ENCODE measurements at regions of chr14 and their contacts with region 1.

Region 1: DNA sequence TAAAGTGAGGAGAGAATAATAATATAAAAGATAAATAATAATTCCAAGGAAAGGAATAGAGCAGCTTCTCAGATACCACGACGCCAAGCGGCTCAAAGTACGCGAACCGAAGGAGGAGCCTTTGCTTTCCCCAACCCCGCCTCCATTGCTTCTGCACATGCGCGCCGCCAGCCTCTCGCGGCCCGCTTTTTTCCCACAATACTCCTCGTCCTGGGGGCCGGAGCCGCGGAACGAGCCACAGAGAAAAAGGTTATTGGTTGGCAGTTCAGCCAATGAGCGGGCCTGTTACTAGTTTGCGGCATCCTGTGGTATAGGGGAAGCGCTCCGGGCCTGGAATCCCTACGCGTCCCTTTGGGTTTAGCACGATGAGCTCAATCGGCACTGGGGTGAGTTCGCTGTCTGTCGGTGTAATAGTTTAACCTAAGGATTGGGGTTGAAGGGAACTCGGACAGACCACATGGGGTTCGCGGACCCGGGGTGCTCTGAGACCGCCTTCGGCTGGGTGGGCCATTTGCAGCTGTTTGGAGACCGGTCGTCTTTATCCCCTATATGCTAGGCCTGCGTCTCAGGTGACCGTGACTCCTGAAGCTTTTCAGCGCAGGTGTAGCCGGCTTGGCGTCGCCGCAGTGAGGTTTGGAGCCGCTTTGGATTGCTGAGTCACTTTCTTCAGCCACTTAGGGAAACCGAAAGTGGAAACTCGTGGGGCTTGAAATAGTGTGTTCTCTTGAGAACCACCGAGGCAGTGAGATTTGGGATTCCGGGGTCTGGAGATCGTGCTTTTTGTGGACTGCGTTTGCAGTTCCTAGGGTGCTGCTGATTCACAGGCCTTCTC is at the start of gene PSMA3:
- DNase-seq: peak; percentile 98 to 99 (median 98)
- ATAC-seq: peak; percentile 97 to 98
- H3K4me3 ChIP-seq: peak within 1 kb of the TSS; percentile 84
- H3K27ac ChIP-seq: peak within 1 kb of the TSS; percentile 94
- H3K4me1 ChIP-seq: no peaks in the 10 kb centered on the region
- H3K27me3 ChIP-seq: no peaks in the 10 kb centered on the region
- total RNA-seq, gene PSMA3: 112 to 147 (median 124) TPM

Region 2: DNA sequence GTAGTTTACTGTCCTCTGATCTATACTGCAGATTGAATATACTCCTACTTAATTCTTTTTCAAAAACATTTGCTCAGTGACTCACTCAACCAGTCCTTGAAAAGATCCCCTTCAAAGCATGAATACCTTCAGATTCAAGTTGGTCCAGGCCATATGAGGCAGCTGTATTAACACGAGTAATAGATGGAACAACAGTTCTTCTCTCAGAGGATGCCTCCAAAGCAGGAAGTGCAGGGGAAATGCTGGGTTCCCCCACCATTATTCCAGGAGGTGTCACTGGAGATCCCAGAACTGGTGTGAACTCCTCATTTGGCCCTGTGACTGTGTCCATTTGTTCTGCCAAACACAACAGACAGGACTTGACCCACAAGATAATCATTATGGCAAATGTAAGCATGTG is 113.4 kb before region 1 on chr14:
- intact Hi-C with region 1: no loop called
- DNase-seq: no peak
- ATAC-seq: peak; percentile 59 to 64
- H3K4me3 ChIP-seq: no peak overlapping the region
- H3K27ac ChIP-seq: no peak overlapping the region
- H3K4me1 ChIP-seq: no peaks in the 10 kb centered on the region
- H3K27me3 ChIP-seq: no peaks in the 10 kb centered on the region

Region 3: DNA sequence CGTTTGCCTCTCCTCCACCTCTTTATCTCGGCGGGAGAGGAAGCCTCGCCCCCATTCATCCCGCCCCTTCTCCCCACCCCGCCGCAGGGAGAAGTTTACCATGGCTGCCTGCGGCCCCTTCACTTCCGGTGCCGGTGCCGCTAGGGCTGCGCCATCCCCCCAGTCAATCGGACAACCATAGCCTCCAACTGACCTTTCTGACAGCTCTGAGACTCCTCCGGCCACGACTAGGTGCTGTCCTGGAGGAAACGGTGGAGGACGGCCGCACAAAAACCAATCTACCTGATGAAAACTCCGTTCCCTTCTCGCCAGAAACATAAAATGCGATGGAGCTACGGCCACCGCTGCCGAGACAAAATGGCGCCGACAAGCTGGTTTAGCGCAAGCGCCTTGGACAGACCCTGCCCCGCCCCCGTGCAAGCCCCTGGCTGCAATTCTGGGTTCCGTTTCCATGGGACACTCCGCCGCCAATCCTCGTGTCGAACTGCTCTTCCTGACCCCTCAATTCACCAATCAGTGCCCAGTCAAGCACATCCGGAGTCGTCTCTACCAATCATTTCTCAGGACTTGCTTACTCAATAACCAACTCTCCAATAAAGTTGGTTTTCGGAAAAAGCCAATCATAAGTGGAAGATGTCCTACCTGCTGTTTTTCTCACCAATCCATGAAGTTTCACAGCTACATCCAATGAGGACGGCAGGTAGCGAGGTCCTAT is 53.1 kb after region 1 on chr14:
- intact Hi-C with region 1: loop called in 2 of 4 experiments (anchors 10 kb)
- DNase-seq: peak; percentile 98 to 99 (median 99)
- ATAC-seq: peak; percentile 97
- H3K4me3 ChIP-seq: peak overlapping the region; percentile 100
- H3K27ac ChIP-seq: peak overlapping the region; percentile 97
- H3K4me1 ChIP-seq: peaks cover 8% of the 10 kb centered on the region
- H3K27me3 ChIP-seq: no peaks in the 10 kb centered on the region

Region 4: DNA sequence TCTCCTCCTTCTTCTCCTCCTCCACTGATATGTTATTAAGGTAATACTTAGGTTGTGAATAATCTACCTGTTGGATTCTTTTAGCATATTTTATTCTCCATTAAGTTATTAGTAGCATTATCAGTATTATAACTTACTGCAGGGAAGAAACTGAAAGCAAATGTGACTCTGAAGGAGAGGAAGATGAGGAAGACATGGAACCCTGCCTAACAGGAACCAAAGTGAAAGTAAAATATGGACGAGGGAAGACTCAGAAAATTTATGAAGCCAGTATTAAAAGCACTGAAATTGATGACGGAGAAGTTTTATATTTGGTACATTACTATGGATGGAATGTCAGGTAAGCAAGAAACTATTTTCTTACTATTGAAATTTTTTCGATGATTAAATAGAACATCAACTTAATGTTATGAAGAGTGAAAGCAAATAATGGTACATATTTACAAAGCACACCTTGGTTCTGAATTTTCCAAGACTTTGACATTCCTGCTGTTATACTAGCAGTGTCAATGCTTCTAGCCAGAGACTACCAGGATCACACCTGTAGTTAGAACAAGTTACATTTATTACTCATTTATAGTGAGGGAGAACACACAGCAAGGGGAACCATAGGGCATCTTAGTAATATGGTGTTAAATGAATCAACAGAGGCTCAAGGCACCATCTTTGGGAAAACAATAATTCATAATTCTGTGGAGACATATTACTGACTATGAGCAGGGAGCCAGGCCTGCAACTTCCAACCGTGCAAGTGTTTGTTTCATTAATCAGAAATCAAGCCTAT is 108.9 kb after region 1 on chr14:
- intact Hi-C with region 1: no loop called
- DNase-seq: no peak
- ATAC-seq: no peak
- H3K4me3 ChIP-seq: peak overlapping the region; percentile 7
- H3K27ac ChIP-seq: no peak overlapping the region
- H3K4me1 ChIP-seq: no peaks in the 10 kb centered on the region
- H3K27me3 ChIP-seq: no peaks in the 10 kb centered on the region

Measured in right cardiac atrium (tissue), 5 donors.